ENCODE measurements at regions of chr7 and their contacts with region 1.

Region 1: GRCh38 chr7:1503816-1504775 is at the start of gene INTS1:
- DNase-seq: peak; percentile 91
- H3K4me3 ChIP-seq: peak within 1 kb of the TSS; percentile 99
- H3K27ac ChIP-seq: peak within 1 kb of the TSS; percentile 71 to 75
- H3K4me1 ChIP-seq: peaks cover 8% of the 10 kb centered on the region
- H3K27me3 ChIP-seq: no peaks in the 10 kb centered on the region
- CTCF ChIP-seq: peak; percentile 96 to 99 (median 97)
- POLR2A ChIP-seq: peak; percentile 54
- total RNA-seq, gene INTS1: 64.9 to 146 TPM

Region 2: DNA sequence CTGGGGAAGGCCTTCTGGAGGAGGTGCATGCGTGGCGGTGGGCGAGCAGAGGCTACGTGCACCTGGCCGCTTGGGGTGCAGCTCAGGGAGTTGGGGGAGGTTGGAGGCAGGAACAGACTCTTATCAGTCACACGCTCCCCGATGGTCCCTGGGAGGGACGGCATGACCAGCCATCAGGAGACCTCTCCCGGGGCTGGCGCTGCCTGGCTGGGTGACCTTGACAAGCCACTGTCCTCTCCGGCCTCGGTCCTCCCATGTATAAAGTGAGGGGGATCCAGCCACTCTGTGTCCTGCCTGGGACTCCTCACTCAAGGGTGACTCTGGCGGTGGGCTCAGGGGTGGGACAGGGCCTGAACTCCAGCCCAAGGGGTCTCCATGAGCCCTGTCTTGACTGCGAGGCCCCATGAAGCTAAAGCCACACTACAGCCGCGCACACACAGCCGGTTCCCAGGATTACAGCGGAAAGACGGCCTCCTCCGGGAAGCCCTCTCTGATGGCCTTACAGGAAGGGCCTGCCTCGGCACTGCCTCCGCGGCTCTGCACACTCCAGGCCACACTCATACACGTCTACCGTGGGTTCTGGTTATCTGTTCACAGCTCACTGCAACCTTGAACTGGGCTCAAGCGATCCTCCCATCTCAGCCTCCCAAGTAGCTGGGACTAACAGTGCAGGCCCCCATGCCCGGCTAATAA is 49.6 kb after region 1 on chr7:
- intact Hi-C with region 1: loop called (anchors 5 kb)
- DNase-seq: no peak
- H3K4me3 ChIP-seq: no peak overlapping the region
- H3K27ac ChIP-seq: no peak overlapping the region
- H3K4me1 ChIP-seq: peaks cover 13% of the 10 kb centered on the region
- H3K27me3 ChIP-seq: no peaks in the 10 kb centered on the region
- CTCF ChIP-seq: no peak
- POLR2A ChIP-seq: no peak

Region 3: GRCh38 chr7:1646957-1647891 is 143.1 kb after region 1 on chr7:
- intact Hi-C with region 1: no loop called
- DNase-seq: no peak
- H3K4me3 ChIP-seq: no peak overlapping the region
- H3K27ac ChIP-seq: no peak overlapping the region
- H3K4me1 ChIP-seq: peaks cover 5% of the 10 kb centered on the region
- H3K27me3 ChIP-seq: peaks cover 2% of the 10 kb centered on the region
- CTCF ChIP-seq: no peak
- POLR2A ChIP-seq: no peak